ENCODE measurements at regions of chr12 and their contacts with region 1.

Region 1: GRCh38 chr12:103548622-103549601 is 38.2 kb upstream of the STAB2 start:
- DNase-seq: peak; percentile 79

Region 2: DNA sequence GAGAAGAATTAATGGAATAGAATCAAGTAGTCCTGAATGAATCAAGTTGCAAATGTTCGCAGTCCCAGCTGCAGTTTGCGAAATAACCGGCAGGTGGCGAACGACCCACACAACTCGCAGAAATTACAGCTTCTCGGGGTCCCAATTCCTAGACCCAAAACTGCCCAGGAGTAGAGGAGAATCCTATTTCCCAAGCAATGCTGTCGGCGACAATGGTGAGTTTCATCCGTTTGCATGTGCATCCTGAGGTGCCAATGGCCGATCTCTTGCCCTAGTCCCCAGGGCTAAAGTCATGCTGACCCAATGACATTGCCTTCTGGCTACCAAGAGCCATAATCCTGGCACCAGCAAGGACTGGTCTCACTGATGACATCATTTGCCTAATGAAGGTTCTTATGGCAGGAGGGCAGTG is 600.0 kb before region 1 on chr12:
- in situ Hi-C with region 1: loop called (anchors 10 kb)
- DNase-seq: peak; percentile 71